Gastrocnemius medialis (tissue), 4 donors: ENCODE measurements at regions of chr19 and their contacts with region 1.

Region 1: GRCh38 chr19:6362027-6362350 is 658 bp downstream of the CLPP start:
- DNase-seq: no peak
- ATAC-seq: no peak
- H3K4me3 ChIP-seq: peak overlapping the region; percentile 78 to 87 (median 86)
- H3K27ac ChIP-seq: peak overlapping the region; percentile 84 to 88 (median 86)
- H3K4me1 ChIP-seq: peaks cover 9 to 11% of the 10 kb centered on the region in 2 donors
- H3K27me3 ChIP-seq: no peaks in the 10 kb centered on the region
- CTCF ChIP-seq: no peak
- POLR2A ChIP-seq: no peak

Region 2: GRCh38 chr19:6460101-6460853 is 98.3 kb after region 1 on chr19:
- in situ Hi-C with region 1: no loop called
- intact Hi-C with region 1: loop called (anchors 1 kb)
- DNase-seq: peak; percentile 90 to 94
- ATAC-seq: peak; percentile 94 to 95
- H3K4me3 ChIP-seq: peak overlapping the region; percentile 64 to 82 (median 71)
- H3K27ac ChIP-seq: peak overlapping the region; percentile 78 to 81 (median 80)
- H3K4me1 ChIP-seq: peaks cover 5 to 14% of the 10 kb centered on the region in 2 donors
- H3K27me3 ChIP-seq: peaks cover 18 to 23% (median 21%) of the 10 kb centered on the region in 3 donors
- CTCF ChIP-seq: peak in 4 of 5 experiments; percentile 58 to 79 (median 74)
- POLR2A ChIP-seq: no peak